ENCODE measurements at regions of chr18 and their contacts with region 1.

Region 1: GRCh38 chr18:3340015-3340681 is 78.2 kb downstream of the MYL12B start:
- DNase-seq: no peak
- ATAC-seq: no peak

Region 2: GRCh38 chr18:3424280-3424890 is 84.2 kb after region 1 on chr18:
- intact Hi-C with region 1: loop called (anchors 10 kb)
- DNase-seq: no peak
- ATAC-seq: no peak